IMR-90 (cell line): ENCODE measurements at regions of chr1 and their contacts with region 1.

Region 1: GRCh38 chr1:58783993-58784757 is at the start of gene JUN:
- DNase-seq: peak; percentile 100
- ATAC-seq: peak; percentile 83
- H3K4me3 ChIP-seq: peak within 1 kb of the TSS; percentile 98
- H3K27ac ChIP-seq: peak within 1 kb of the TSS; percentile 91
- H3K4me1 ChIP-seq: peaks cover 8% of the 10 kb centered on the region
- H3K27me3 ChIP-seq: no peaks in the 10 kb centered on the region
- CTCF ChIP-seq: no peak
- POLR2A ChIP-seq: 0 out of 2 replicates have a peak, but pooled peaks have one; percentile 100
- RAD21 ChIP-seq: no peak; the same call in 1 of the 2 replicates
- total RNA-seq, gene JUN: 46.6 and 51.1 TPM in 2 replicates

Region 2: DNA sequence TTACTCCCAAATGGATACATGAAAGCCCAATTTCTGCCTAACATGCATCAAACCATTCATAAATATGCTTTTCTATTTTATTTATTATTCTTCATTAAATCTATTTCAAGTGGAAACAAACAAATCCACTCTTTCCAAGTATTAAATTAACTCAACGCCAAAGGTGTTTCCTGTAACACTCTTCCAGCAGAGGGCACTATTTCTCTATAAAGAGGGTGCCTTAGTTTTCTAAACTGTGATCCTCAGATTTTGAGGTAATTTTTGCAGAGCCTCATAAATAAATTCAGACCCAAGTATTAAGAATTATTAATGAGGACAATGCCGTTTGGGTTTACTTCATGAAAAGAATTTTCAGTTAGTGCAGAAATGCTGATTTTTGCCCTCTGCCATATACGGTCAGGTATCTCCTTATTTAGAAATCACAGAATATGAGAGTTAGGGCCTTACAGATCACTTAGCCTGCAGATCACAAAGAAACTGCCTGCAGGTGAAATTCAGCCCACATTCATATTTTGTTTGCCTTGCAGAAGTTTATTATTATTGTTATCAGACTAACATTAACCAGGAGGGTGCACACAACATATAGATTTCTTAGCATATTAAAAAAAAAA is 44.2 kb before region 1 on chr1:
- CTCF ChIA-PET with region 1: no interaction called
- POLR2A ChIA-PET with region 1: interaction called, 5 read pairs
- dilution Hi-C with region 1: no loop called
- in situ Hi-C with region 1: no loop called
- intact Hi-C with region 1: loop called (anchors 2 kb)
- DNase-seq: peak; percentile 71
- ATAC-seq: peak; percentile 64; the same call in 1 of the 2 replicates
- H3K4me3 ChIP-seq: no peak overlapping the region
- H3K27ac ChIP-seq: no peak overlapping the region
- H3K4me1 ChIP-seq: no peaks in the 10 kb centered on the region
- H3K27me3 ChIP-seq: no peaks in the 10 kb centered on the region
- CTCF ChIP-seq: peak; percentile 93
- POLR2A ChIP-seq: no peak
- RAD21 ChIP-seq: peak; percentile 94

Region 3: GRCh38 chr1:58841455-58841854 is 57.3 kb after region 1 on chr1:
- CTCF ChIA-PET with region 1: no interaction called
- POLR2A ChIA-PET with region 1: no interaction called
- dilution Hi-C with region 1: no loop called
- in situ Hi-C with region 1: no loop called
- intact Hi-C with region 1: no loop called
- DNase-seq: no peak
- ATAC-seq: no peak
- H3K4me3 ChIP-seq: no peak overlapping the region
- H3K27ac ChIP-seq: no peak overlapping the region
- H3K4me1 ChIP-seq: peaks cover 6% of the 10 kb centered on the region
- H3K27me3 ChIP-seq: no peaks in the 10 kb centered on the region
- CTCF ChIP-seq: peak; percentile 16; the same call in 1 of the 2 replicates
- POLR2A ChIP-seq: no peak
- RAD21 ChIP-seq: no peak

Region 4: DNA sequence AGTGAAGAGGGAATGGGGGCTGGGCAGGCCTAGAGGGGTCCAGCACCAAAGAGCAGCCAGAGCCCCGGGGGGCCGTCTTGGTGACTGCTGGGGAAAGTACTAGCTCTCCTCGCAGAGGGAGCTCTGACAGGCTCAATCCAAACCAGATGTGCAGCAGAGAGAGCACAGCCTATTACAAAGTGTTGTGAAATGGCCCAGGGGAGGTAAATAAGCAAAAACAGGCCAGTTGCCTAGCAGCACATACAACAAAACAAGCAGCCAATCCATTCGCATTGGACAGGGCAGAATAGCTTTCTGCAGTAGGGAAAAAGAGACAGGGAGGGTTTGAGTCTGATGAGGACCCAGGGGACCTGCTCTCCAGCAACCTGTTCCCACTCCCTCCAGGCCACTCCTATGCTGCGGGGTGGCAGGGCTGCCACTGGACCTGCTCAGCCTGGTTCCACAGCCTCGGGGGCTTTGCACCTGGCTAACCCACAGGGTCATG is 273.1 kb after region 1 on chr1:
- CTCF ChIA-PET with region 1: interaction called, 3 read pairs
- POLR2A ChIA-PET with region 1: no interaction called
- dilution Hi-C with region 1: no loop called
- in situ Hi-C with region 1: no loop called
- intact Hi-C with region 1: loop called (anchors 1 kb)
- DNase-seq: peak; percentile 93
- ATAC-seq: peak; percentile 76
- H3K4me3 ChIP-seq: no peak overlapping the region
- H3K27ac ChIP-seq: no peak overlapping the region
- H3K4me1 ChIP-seq: peaks cover 2% of the 10 kb centered on the region; the same call in 1 of the 2 replicates
- H3K27me3 ChIP-seq: no peaks in the 10 kb centered on the region
- CTCF ChIP-seq: no peak
- POLR2A ChIP-seq: no peak
- RAD21 ChIP-seq: peak; percentile 18

Region 5: GRCh38 chr1:59296358-59297256 is 512.4 kb after region 1 on chr1 and contains the start of gene FGGY:
- CTCF ChIA-PET with region 1: no interaction called
- POLR2A ChIA-PET with region 1: no interaction called
- dilution Hi-C with region 1: no loop called
- in situ Hi-C with region 1: loop called (anchors 25 kb)
- intact Hi-C with region 1: loop called (anchors 1 kb)
- DNase-seq: peak; percentile 98
- ATAC-seq: peak; percentile 93
- H3K4me3 ChIP-seq: peak within 1 kb of the TSS; percentile 74
- H3K27ac ChIP-seq: peak within 1 kb of the TSS; percentile 99
- H3K4me1 ChIP-seq: peaks cover 6% of the 10 kb centered on the region
- H3K27me3 ChIP-seq: no peaks in the 10 kb centered on the region
- CTCF ChIP-seq: no peak
- POLR2A ChIP-seq: peak; percentile 84
- RAD21 ChIP-seq: peak; percentile 29; the same call in 1 of the 2 replicates
- total RNA-seq, gene FGGY: 12.8 and 14.0 TPM in 2 replicates

Region 6: GRCh38 chr1:59570524-59570923 is 786.3 kb after region 1 on chr1:
- CTCF ChIA-PET with region 1: no interaction called
- POLR2A ChIA-PET with region 1: no interaction called
- dilution Hi-C with region 1: no loop called
- in situ Hi-C with region 1: no loop called
- intact Hi-C with region 1: loop called (anchors 1 kb)
- DNase-seq: peak; percentile 43
- ATAC-seq: peak; percentile 31
- H3K4me3 ChIP-seq: no peak overlapping the region
- H3K27ac ChIP-seq: no peak overlapping the region
- H3K4me1 ChIP-seq: peaks cover 6% of the 10 kb centered on the region; the same call in 1 of the 2 replicates
- H3K27me3 ChIP-seq: no peaks in the 10 kb centered on the region
- CTCF ChIP-seq: no peak
- POLR2A ChIP-seq: no peak
- RAD21 ChIP-seq: no peak

Region 7: DNA sequence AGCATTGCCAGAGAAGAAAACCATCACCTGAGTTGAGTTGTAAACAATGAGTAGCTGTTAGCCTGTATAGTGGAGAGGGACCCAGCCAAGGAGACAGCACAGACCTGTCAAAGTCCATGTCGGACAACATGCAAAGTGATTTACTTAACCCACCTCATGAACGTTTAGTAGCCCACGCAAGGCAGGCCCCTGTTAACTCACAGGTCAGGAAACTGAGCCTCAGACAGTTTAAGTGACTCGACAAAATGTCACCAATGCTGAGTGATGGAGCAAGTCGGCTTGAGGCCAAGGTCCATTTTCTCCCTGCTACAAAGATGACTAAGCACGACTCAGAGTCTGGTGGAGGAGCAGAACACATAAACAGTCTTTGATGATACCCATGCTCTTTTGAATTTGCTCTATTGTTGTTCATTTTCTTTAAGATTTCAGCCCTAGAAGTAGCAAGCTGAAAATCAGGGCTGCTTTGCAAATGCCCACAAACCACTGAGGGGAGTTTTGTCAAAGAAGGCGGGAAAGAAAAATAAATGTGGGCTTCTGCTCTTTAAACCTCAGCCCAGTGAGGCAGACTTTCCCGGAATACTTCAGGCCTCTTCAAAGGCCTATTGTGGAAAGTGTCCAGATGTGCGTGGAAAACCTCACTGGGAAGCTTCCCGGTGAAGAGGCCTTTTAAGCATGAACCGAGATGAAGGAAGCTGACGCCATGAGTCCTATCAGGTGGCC is 946.7 kb after region 1 on chr1:
- CTCF ChIA-PET with region 1: no interaction called
- POLR2A ChIA-PET with region 1: interaction called, 3 read pairs
- dilution Hi-C with region 1: no loop called
- in situ Hi-C with region 1: no loop called
- intact Hi-C with region 1: loop called (anchors 1 kb)
- DNase-seq: peak; percentile 99
- ATAC-seq: peak; percentile 68
- H3K4me3 ChIP-seq: no peak overlapping the region
- H3K27ac ChIP-seq: peak overlapping the region; percentile 85
- H3K4me1 ChIP-seq: peaks cover 36% of the 10 kb centered on the region
- H3K27me3 ChIP-seq: no peaks in the 10 kb centered on the region
- CTCF ChIP-seq: no peak
- POLR2A ChIP-seq: peak; percentile 59; the same call in 1 of the 2 replicates
- RAD21 ChIP-seq: no peak

Region 8: DNA sequence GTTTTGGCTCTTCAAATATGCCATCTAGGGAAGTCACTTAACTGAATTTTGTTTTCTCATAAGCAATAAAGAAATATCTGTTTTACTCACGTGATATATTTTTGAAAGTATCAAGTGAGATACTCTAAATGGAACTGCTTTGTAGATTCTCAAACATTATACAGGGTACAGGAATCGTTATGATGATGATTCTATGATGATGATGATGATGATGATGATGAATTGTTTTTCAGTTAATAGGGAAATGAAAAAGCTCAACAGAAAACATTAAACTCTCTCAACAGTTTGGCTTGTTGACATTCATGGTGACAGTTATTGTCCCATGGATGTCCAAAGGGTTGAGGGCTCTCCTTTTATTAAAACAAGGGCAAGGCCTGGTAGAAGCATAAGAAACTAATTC is 1531.7 kb after region 1 on chr1:
- CTCF ChIA-PET with region 1: no interaction called
- POLR2A ChIA-PET with region 1: no interaction called
- dilution Hi-C with region 1: no loop called
- in situ Hi-C with region 1: no loop called
- intact Hi-C with region 1: no loop called
- DNase-seq: no peak
- ATAC-seq: no peak
- H3K4me3 ChIP-seq: no peak overlapping the region
- H3K27ac ChIP-seq: no peak overlapping the region
- H3K4me1 ChIP-seq: no peaks in the 10 kb centered on the region
- H3K27me3 ChIP-seq: no peaks in the 10 kb centered on the region
- CTCF ChIP-seq: no peak
- POLR2A ChIP-seq: no peak
- RAD21 ChIP-seq: no peak